ENCODE measurements at regions of chr9 and their contacts with region 1.

Region 1: GRCh38 chr9:33860200-33860871 is 43.4 kb downstream of the UBE2R2 start:
- DNase-seq: no peak
- H3K4me3 ChIP-seq: no peak overlapping the region
- H3K27ac ChIP-seq: no peak overlapping the region
- H3K4me1 ChIP-seq: peaks cover 4% of the 10 kb centered on the region
- H3K27me3 ChIP-seq: no peaks in the 10 kb centered on the region
- CTCF ChIP-seq: 0 out of 2 replicates have a peak, but pooled peaks have one; percentile 19

Region 2: DNA sequence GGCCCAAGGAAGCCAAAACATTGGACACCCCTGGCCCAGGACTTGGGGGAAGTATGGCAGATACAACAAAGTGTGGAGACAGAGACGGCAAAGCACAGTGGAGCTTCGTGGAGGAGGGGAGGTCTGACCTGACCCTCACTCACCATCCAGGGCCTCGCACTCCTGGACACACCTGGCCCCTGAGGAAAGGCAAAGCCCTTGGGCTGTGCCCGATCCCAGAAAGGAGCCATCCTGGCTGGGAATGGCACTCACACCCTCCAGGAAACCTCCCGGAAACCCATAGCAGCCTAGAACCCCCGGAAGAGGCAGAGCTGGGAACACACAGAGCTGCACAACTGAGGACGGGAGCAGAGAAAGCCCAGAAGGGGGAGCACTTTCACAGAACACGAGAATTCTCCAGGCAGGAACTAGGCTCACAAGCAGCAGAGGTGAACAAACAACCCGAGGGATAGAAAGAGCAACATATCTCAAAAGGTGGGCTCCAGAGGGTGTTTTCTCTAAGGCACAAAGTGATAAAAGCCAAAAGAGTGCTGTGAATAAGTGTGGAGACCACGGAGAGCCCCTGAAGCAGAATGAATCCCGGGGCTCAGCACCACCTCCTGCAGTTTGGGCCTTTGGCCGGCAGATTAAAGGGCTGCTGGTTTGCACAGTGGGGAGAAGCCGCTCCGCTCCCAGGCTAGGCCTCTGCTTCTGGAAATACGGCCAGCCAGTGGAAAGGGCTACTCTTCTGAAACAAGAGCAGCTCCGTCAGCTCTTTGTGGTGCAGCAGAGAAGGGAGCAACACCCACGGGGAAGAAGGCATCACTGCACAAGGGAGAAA is 64.9 kb after region 1 on chr9:
- CTCF ChIA-PET with region 1: interaction called, 11 read pairs
- POLR2A ChIA-PET with region 1: no interaction called
- intact Hi-C with region 1: no loop called
- DNase-seq: peak; percentile 68
- H3K4me3 ChIP-seq: no peak overlapping the region
- H3K27ac ChIP-seq: no peak overlapping the region
- H3K4me1 ChIP-seq: no peaks in the 10 kb centered on the region
- H3K27me3 ChIP-seq: no peaks in the 10 kb centered on the region
- CTCF ChIP-seq: peak; percentile 81

Measured in A673 (cell line).